ENCODE measurements at regions of chr22 and their contacts with region 1.

Region 1: GRCh38 chr22:31290494-31291471 is 1.5 kb downstream of the PIK3IP1 start:
- DNase-seq: peak; percentile 93 to 97 (median 96)
- ATAC-seq: peak; percentile 68 to 72
- H3K4me3 Mint-ChIP-seq: peak overlapping the region; percentile 92 to 100 (median 98)
- H3K27ac Mint-ChIP-seq: peak overlapping the region; percentile 99 to 100 (median 100)
- H3K4me1 Mint-ChIP-seq: peaks cover 31 to 78% (median 66%) of the 10 kb centered on the region in 4 donors
- H3K27me3 Mint-ChIP-seq: peaks cover 0 to 5% (median 0%) of the 10 kb centered on the region in 5 donors

Region 2: DNA sequence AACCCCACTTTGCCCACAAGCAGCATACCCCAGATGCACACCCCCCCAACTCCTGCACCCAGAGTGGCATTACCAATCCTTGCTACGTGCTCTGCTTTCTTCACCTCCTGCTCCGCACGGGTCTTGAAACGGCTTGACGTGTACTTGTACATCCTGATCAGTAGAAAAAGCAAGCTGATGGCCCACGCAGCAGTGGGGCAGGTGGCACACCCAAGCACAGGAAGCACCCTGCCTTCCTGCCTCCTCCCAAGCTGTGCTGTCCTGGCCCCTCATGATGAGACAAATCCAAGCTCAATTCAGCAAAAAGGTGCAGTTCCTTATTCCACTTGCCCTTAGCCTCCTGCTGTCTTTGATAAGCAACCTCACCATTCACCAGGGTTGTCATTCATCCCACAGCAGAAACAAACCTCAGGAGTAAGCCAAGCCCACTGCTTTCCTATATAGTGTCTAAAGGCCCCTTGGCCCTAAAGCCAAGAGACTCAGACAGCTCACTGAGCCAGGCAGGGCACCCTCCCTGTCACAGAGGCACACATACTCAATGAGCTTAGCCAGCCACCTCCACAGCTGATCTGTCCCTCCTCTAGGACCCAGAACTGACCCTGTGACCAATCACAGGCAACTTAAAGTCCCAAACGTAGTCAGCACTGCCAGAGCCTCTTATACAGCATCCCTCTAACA is 350.0 kb before region 1 on chr22:
- POLR2A ChIA-PET with region 1: interaction called, 27 read pairs
- DNase-seq: peak; percentile 16 to 77 (median 46)
- ATAC-seq: peak; percentile 73 to 79
- H3K4me3 Mint-ChIP-seq: peak overlapping the region; percentile 81 to 92 (median 86)
- H3K27ac Mint-ChIP-seq: peak overlapping the region; percentile 93 to 98 (median 96)
- H3K4me1 Mint-ChIP-seq: peaks cover 38 to 92% (median 87%) of the 10 kb centered on the region in 4 donors
- H3K27me3 Mint-ChIP-seq: no peaks in the 10 kb centered on the region

Region 3: DNA sequence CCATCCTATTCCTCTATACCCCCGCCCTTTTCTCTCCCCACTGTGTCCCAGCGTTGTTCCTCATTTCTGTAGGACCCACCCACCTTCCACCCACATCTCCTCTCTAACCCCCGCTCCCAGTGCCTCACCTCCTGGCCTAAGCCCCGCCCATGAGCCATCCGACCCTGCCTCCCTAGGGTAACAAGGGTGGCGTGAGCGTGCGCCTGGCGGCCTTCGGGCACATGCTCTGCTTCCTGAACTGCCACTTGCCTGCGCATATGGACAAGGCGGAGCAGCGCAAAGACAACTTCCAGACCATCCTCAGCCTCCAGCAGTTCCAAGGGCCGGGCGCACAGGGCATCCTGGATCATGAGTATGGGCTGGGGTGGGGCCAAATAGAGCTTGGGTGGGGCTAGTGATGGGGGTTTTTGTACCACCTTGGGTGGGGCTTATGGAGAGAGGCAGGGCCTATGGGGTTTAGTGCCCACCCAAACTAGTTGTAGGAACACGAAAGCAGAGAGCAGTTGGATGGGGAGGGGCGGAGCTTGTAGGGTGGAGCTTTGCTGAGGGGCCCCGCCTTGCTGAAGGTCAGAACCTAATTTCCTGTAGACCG is 163.5 kb before region 1 on chr22:
- POLR2A ChIA-PET with region 1: no interaction called
- DNase-seq: peak in 1 of 10 donors; percentile 27
- ATAC-seq: no peak
- H3K4me3 Mint-ChIP-seq: no peak overlapping the region
- H3K27ac Mint-ChIP-seq: no peak overlapping the region
- H3K4me1 Mint-ChIP-seq: peaks cover 0 to 4% (median 0%) of the 10 kb centered on the region in 4 donors
- H3K27me3 Mint-ChIP-seq: peaks cover 0 to 9% (median 0%) of the 10 kb centered on the region in 5 donors

Region 4: DNA sequence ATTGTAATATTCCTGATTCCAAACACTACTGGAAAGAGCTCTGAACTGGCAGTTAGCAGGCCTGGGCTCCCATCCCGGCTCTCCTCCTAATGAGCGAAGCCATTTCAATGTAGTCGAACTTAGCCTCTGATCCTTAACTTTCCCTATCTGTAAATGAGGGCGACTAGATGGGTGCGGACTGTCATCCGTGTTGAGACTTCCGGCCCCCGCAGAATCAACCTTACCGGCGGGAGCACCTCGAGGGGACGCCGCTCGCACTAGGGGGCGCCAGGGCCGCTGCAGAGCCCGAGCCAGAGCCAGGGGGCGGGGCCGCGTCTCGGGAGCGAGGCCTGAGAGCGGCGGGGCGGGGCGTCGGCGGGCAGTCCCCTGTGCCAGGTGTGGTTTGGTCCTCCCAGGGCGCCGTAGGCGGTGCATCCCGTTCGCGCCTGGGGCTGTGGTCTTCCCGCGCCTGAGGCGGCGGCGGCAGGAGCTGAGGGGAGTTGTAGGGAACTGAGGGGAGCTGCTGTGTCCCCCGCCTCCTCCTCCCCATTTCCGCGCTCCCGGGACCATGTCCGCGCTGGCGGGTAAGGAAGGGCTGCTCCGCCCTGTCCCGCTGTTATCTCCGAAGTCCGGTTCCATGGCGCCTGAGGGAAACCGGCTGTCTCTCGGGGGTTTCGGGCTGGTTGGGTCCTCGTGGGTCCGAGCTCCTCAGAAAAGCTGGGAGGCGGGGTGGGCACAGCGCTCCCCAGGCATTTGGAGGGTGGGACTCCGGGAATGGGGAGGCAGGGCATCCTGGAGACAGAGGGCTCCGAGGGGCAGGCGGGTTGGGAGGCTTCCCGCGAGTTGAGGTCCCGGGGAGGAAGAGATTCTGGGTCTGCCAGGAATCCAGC is 78.7 kb before region 1 on chr22 and contains the start of gene LIMK2:
- POLR2A ChIA-PET with region 1: interaction called, 96 read pairs
- DNase-seq: peak; percentile 89 to 100 (median 96)
- ATAC-seq: peak; percentile 98 to 99
- H3K4me3 Mint-ChIP-seq: peak within 1 kb of the TSS; percentile 82 to 90 (median 89)
- H3K27ac Mint-ChIP-seq: peak within 1 kb of the TSS in 9 of 10 donors; percentile 88 to 94 (median 93)
- H3K4me1 Mint-ChIP-seq: peaks cover 19 to 55% (median 49%) of the 10 kb centered on the region in 4 donors
- H3K27me3 Mint-ChIP-seq: no peaks in the 10 kb centered on the region
- polyA plus RNA-seq, gene LIMK2: 7.4 to 21.0 (median 12.7) TPM

Region 5: DNA sequence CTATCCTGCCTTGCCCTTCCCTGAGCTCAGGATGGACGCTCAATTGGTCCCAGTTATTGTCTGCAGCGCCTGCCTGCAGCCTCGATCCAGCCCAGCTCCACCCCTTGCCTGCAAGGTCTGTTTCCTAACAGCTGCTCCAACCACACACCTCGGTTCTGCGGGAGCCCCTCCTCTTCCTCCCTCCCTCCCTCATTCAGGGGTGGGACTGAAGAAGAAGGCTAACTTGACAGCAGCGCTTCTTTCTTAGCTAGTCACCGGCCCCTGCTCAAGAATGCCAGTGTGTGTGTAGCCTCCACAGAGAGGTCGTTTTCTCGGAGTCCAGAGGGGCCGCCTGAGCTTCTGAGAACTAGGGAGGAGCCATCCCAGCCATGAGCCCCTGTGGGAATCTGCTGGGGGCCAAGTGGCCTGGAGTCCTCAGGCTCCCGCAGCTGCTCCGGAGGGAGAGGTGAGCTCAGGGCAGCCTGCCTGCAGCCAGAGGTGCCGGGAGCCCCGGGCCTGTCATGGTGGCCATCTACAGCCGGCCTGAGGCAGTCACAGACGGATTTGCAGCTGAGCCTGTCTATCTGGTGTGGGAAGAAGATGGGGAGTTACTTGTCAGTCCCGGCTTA is 42.5 kb before region 1 on chr22:
- POLR2A ChIA-PET with region 1: interaction called, 68 read pairs
- DNase-seq: peak; percentile 50 to 84 (median 70)
- ATAC-seq: peak; percentile 100
- H3K4me3 Mint-ChIP-seq: peak overlapping the region; percentile 73 to 90 (median 84)
- H3K27ac Mint-ChIP-seq: peak overlapping the region; percentile 40 to 92 (median 85)
- H3K4me1 Mint-ChIP-seq: peaks cover 8 to 43% (median 21%) of the 10 kb centered on the region in 4 donors
- H3K27me3 Mint-ChIP-seq: no peaks in the 10 kb centered on the region

Region 6: GRCh38 chr22:31272522-31273446 is 18.0 kb before region 1 on chr22:
- POLR2A ChIA-PET with region 1: interaction called, 1,498 read pairs
- DNase-seq: peak in 7 of 10 donors; percentile 49 to 77 (median 53)
- ATAC-seq: peak; percentile 65 to 66
- H3K4me3 Mint-ChIP-seq: peak overlapping the region in 8 of 10 donors; percentile 7 to 66 (median 24)
- H3K27ac Mint-ChIP-seq: peak overlapping the region; percentile 89 to 97 (median 94)
- H3K4me1 Mint-ChIP-seq: peaks cover 42 to 82% (median 73%) of the 10 kb centered on the region in 4 donors
- H3K27me3 Mint-ChIP-seq: no peaks in the 10 kb centered on the region

Region 7: DNA sequence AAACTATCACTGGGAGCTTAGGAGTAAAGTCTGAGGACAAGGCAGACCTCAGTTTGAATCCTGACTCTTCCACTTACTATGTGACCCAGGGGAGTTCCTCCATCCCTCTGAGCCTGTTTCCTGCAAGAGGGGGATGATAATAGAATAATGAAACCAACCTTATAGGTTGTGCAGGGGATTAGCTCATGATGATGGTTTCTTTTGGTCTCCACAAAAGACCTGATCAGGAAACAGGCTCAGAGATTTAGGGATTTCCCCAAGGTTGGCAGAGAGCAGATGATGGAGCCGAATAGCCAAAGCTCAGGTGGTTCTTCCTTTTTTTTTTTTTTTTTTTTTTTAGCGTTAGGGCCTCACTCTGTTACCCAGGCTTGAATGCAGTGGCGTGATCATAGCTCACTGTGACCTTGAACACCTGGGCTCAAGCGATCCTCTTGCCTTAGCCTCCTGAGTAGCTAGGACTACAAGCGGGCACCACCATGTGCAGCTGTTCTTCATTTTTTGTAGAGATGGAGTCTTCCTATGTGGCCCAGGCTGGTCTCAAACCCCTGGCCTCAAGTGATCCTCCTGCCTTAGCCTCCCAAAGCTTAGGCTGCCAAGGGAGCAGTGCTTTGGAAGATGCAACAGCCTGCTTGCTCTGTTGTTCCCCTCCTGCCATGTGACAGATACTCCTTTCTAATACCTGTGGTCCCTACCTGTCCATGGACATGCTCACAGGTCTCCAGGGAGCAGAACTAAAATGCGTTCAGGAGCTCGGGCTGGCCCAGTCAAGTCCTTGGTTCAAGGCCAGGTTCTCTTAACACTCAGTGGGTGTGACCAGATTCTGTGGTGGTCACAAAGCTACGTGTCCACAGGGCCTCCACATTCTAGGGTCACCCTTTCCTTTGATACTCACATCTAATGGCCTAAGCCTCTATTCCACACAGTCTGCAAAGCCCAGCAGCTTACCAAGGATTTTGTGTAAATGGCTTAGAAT is 33.1 kb after region 1 on chr22:
- POLR2A ChIA-PET with region 1: interaction called, 407 read pairs
- DNase-seq: peak in 1 of 10 donors; percentile 32
- ATAC-seq: peak; percentile 46 to 57
- H3K4me3 Mint-ChIP-seq: peak overlapping the region in 1 of 10 donors; percentile 41
- H3K27ac Mint-ChIP-seq: peak overlapping the region; percentile 19 to 85 (median 78)
- H3K4me1 Mint-ChIP-seq: peaks cover 8 to 39% (median 16%) of the 10 kb centered on the region in 4 donors
- H3K27me3 Mint-ChIP-seq: no peaks in the 10 kb centered on the region

Region 8: GRCh38 chr22:31399211-31400028 is 108.6 kb after region 1 on chr22 and contains the start of gene DRG1:
- POLR2A ChIA-PET with region 1: interaction called, 16 read pairs
- DNase-seq: peak; percentile 92 to 98 (median 95)
- ATAC-seq: peak; percentile 96 to 97
- H3K4me3 Mint-ChIP-seq: peak within 1 kb of the TSS; percentile 89 to 98 (median 94)
- H3K27ac Mint-ChIP-seq: peak within 1 kb of the TSS; percentile 90 to 97 (median 96)
- H3K4me1 Mint-ChIP-seq: peaks cover 12 to 38% (median 23%) of the 10 kb centered on the region in 4 donors
- H3K27me3 Mint-ChIP-seq: peaks cover 0 to under 1% (median 0%) of the 10 kb centered on the region in 5 donors
- polyA plus RNA-seq, gene DRG1: 82.1 to 92.7 (median 90.8) TPM

Measured in naive thymus-derived CD8-positive, alpha-beta T cell (primary cell).